Tibial artery (tissue), 4 donors: ENCODE measurements at regions of chr21 and their contacts with region 1.

Region 1: DNA sequence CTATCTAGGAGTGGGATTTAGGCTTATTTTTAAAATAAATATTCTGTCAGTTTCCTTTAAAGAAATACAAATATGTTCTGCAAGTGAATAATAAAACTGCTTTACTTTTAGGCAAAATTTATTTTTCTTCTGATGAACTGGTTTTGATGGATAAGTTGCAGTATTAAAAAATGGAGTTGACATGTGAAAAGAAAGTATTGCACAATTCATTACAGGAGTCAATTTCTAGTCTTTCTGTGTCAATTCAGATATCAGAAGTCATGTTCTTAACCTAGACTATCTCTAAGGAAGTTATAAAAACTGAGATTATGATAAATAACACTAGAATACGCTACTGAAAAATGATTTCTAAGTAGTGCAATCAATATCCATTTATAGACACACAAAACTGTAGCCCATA is 270.2 kb upstream of the TMPRSS15 start:
- DNase-seq: no peak
- H3K4me3 ChIP-seq: no peak overlapping the region
- H3K27ac ChIP-seq: no peak overlapping the region
- H3K4me1 ChIP-seq: no peaks in the 10 kb centered on the region
- H3K27me3 ChIP-seq: no peaks in the 10 kb centered on the region
- CTCF ChIP-seq: no peak

Region 2: DNA sequence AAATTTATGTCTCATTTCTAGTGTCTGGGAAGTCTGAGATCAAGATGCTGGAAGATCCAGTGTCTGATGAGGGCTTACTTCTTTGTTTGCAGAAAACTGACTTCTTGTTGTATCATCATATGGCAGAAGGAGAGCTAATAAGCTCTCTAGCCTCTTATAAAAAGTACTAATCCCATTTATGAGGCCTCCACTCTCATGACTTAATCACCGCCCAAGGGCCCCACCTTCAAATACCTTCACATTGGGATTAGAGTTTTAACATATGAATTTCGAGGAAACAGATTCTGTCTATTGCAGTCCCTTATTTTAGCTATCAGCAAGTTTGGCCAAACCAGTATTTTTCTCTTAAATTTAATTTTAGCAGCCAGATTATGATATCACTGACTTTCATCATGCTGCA is 120.0 kb before region 1 on chr21:
- intact Hi-C with region 1: no loop called
- DNase-seq: no peak
- H3K4me3 ChIP-seq: no peak overlapping the region
- H3K27ac ChIP-seq: no peak overlapping the region
- H3K4me1 ChIP-seq: no peaks in the 10 kb centered on the region
- H3K27me3 ChIP-seq: no peaks in the 10 kb centered on the region
- CTCF ChIP-seq: no peak

Region 3: DNA sequence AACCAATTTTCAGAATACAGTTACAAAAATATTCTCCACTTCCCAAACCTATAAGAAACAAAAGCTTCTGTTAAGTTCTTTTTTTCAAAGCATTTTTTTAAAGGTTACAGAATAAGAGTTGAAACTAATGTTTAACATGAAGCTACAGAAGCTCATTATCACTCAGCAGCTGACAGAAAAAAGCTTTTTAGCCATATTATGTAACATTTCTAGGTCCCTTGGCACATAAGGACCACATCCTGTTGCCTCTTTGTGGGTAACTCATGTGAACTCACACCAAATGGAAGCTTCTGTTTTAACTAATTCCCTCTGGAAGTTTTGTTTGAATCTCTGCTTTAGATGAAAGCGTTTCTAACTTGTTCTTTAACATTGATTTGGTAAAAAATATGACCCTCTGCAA is 27.7 kb before region 1 on chr21:
- intact Hi-C with region 1: loop called (anchors 1 kb)
- DNase-seq: no peak
- H3K4me3 ChIP-seq: no peak overlapping the region
- H3K27ac ChIP-seq: no peak overlapping the region
- H3K4me1 ChIP-seq: no peaks in the 10 kb centered on the region
- H3K27me3 ChIP-seq: no peaks in the 10 kb centered on the region
- CTCF ChIP-seq: no peak